Esophagus squamous epithelium (tissue), 5 donors: ENCODE measurements at regions of chr1 and their contacts with region 1.

Region 1: DNA sequence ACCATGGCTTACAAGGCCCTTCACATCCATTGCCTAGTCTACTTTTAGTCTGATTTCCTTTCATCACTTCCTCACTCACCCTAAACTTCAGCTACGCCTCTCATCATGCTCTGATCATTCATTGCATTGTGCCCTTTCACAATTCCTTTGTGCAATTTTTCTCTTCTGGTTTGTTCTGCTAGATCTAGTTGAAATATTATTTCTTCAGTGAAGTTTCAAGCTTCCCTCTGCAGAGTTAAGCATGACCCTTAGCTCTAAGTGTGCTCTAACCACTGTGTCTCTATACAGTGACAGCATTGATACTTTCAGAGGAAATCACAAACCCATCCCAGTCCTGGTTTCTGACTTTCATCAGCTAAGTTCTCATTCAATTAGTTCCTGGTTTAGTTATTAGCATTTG is 166.1 kb downstream of the PLA2G4A start:
- DNase-seq: no peak
- H3K4me3 ChIP-seq: no peak overlapping the region
- H3K27ac ChIP-seq: no peak overlapping the region
- H3K4me1 ChIP-seq: no peaks in the 10 kb centered on the region
- H3K27me3 ChIP-seq: no peaks in the 10 kb centered on the region
- CTCF ChIP-seq: no peak
- POLR2A ChIP-seq: no peak

Region 2: GRCh38 chr1:186482661-186483255 is 512.1 kb before region 1 on chr1:
- intact Hi-C with region 1: loop called (anchors 10 kb)
- DNase-seq: no peak
- H3K4me3 ChIP-seq: no peak overlapping the region
- H3K27ac ChIP-seq: no peak overlapping the region
- H3K4me1 ChIP-seq: peaks cover 0 to 8% (median 0%) of the 10 kb centered on the region in 3 donors
- H3K27me3 ChIP-seq: no peaks in the 10 kb centered on the region
- CTCF ChIP-seq: peak; percentile 59 to 79 (median 62)
- POLR2A ChIP-seq: no peak